ENCODE measurements at regions of chr22 and their contacts with region 1.

Region 1: DNA sequence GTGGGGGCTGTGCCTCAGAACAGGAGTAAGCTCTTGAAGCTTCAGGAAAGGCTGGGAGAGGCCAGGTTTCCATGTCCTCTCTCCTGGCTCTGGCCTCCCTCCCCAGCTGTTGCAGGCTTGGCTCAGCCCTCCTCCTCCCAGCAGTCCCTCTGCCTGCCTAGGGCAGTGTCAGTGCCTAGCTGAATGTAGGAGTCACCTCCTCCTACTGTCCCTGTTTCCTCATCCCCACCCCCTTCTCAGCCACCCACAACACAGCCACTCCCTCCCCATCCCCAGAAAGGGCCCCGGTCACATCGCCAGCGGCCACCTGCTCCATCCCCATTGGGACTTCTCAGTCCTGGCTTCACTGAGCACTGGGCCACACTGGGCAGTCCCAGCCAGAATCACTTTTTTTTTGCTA is 2.9 kb upstream of the FBLN1 start:
- DNase-seq: no peak
- ATAC-seq: no peak
- H3K4me3 ChIP-seq: no peak overlapping the region
- H3K4me3 Mint-ChIP-seq: no peak overlapping the region
- H3K27ac ChIP-seq: no peak overlapping the region
- H3K27ac Mint-ChIP-seq: no peak overlapping the region
- H3K4me1 ChIP-seq: peaks cover 5 to 7% of the 10 kb centered on the region in 2 donors
- H3K4me1 Mint-ChIP-seq: peaks cover 2% of the 10 kb centered on the region
- H3K27me3 ChIP-seq: peaks cover 0 to 23% (median 8%) of the 10 kb centered on the region in 4 experiments
- H3K27me3 Mint-ChIP-seq: peaks cover 45% of the 10 kb centered on the region
- CTCF ChIP-seq: no peak

Region 2: GRCh38 chr22:45444168-45444567 is 55.6 kb before region 1 on chr22:
- CTCF ChIA-PET with region 1: no interaction called
- POLR2A ChIA-PET with region 1: interaction called, 10 read pairs
- intact Hi-C with region 1: no loop called
- DNase-seq: no peak
- ATAC-seq: no peak
- H3K4me3 ChIP-seq: no peak overlapping the region
- H3K4me3 Mint-ChIP-seq: no peak overlapping the region
- H3K27ac ChIP-seq: no peak overlapping the region
- H3K27ac Mint-ChIP-seq: no peak overlapping the region
- H3K4me1 ChIP-seq: peaks cover 0 to 7% of the 10 kb centered on the region in 2 donors
- H3K4me1 Mint-ChIP-seq: peaks cover 10% of the 10 kb centered on the region
- H3K27me3 ChIP-seq: no peaks in the 10 kb centered on the region
- H3K27me3 Mint-ChIP-seq: peaks cover 5% of the 10 kb centered on the region
- CTCF ChIP-seq: no peak

Region 3: DNA sequence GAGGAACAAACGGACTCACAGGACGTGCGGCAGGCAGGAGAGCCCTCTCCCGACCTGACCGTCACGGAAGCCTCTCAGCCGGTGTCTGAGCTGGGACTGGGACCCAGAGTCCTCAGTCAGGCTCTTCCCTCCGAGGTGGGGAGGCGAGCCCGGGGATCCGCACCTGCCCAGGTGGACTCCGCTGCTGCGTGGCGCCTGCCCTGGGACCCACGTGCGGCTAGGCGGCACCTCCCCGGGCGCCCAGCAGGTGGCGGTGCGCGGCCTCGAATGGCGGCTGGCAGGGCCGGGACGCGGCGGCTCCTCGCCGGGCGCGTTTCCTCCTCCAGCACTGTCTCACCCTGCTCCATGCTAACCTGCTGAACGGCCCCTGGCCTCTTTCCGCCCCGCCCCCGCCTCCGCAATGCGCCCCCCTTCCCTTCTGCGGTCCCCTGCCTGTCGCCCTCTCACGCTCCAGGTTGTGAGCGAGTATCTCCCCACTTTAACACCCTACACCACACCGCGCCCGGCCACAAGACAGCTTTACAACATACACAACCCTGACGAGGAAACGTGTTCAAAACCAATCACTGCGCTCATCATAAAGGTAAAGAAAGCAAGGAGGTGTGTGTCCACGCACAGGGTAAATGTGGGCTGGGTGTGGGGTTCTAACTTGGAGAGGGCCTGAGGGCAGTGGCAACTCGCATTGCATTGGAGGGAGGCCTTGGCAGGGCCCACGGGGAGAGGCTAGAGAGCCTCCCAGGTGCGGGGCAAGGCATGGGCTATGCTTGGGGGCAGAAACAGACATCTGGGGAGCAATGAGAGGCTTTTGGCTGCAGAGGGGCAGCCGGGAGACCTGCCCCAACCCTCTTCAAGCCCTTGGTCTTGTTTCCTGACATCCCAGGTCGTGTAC is 146.0 kb after region 1 on chr22:
- CTCF ChIA-PET with region 1: no interaction called
- POLR2A ChIA-PET with region 1: no interaction called
- intact Hi-C with region 1: no loop called
- DNase-seq: peak; percentile 80
- ATAC-seq: peak; percentile 95
- H3K4me3 ChIP-seq: no peak overlapping the region
- H3K4me3 Mint-ChIP-seq: no peak overlapping the region
- H3K27ac ChIP-seq: no peak overlapping the region
- H3K27ac Mint-ChIP-seq: no peak overlapping the region
- H3K4me1 ChIP-seq: peaks cover 7 to 8% of the 10 kb centered on the region in 2 donors
- H3K4me1 Mint-ChIP-seq: peaks cover 6% of the 10 kb centered on the region
- H3K27me3 ChIP-seq: peaks cover 0 to 30% (median 8%) of the 10 kb centered on the region in 4 experiments
- H3K27me3 Mint-ChIP-seq: peaks cover 54% of the 10 kb centered on the region
- CTCF ChIP-seq: peak; percentile 98